K562 (cell line): ENCODE measurements at regions of chr1 and their contacts with region 1.

Region 1: GRCh38 chr1:110203021-110203661 is 7.0 kb upstream of the KCNC4 start:
- DNase-seq: peak; percentile 64 to 80 (median 68)
- ATAC-seq: peak; percentile 75
- H3K4me3 ChIP-seq: no peak overlapping the region
- H3K27ac ChIP-seq: no peak overlapping the region
- H3K4me1 ChIP-seq: no peaks in the 10 kb centered on the region
- H3K27me3 ChIP-seq: peaks cover 3 to 42% of the 10 kb centered on the region in 2 experiments; a peak in 3 of 5 replicates
- CTCF ChIP-seq: peak; percentile 82 to 95 (median 92)
- EP300 ChIP-seq: no peak
- POLR2A ChIP-seq: no peak
- RAD21 ChIP-seq: peak; percentile 93 to 97

Region 2: GRCh38 chr1:110312188-110313121 is 109.3 kb after region 1 on chr1:
- CTCF ChIA-PET with region 1: interaction called, 29 read pairs
- POLR2A ChIA-PET with region 1: interaction called, 3 read pairs
- in situ Hi-C with region 1: loop called (anchors 5 kb)
- intact Hi-C with region 1: loop called (anchors 1 kb)
- DNase-seq: peak; percentile 70 to 76 (median 74)
- ATAC-seq: peak; percentile 98
- H3K4me3 ChIP-seq: no peak overlapping the region
- H3K27ac ChIP-seq: no peak overlapping the region
- H3K4me1 ChIP-seq: no peaks in the 10 kb centered on the region
- H3K27me3 ChIP-seq: peaks cover 0 to 8% of the 10 kb centered on the region in 2 experiments; a peak in 2 of 5 replicates
- CTCF ChIP-seq: peak; percentile 94 to 97 (median 96)
- EP300 ChIP-seq: no peak
- POLR2A ChIP-seq: no peak
- RAD21 ChIP-seq: peak; percentile 96 to 98

Region 3: DNA sequence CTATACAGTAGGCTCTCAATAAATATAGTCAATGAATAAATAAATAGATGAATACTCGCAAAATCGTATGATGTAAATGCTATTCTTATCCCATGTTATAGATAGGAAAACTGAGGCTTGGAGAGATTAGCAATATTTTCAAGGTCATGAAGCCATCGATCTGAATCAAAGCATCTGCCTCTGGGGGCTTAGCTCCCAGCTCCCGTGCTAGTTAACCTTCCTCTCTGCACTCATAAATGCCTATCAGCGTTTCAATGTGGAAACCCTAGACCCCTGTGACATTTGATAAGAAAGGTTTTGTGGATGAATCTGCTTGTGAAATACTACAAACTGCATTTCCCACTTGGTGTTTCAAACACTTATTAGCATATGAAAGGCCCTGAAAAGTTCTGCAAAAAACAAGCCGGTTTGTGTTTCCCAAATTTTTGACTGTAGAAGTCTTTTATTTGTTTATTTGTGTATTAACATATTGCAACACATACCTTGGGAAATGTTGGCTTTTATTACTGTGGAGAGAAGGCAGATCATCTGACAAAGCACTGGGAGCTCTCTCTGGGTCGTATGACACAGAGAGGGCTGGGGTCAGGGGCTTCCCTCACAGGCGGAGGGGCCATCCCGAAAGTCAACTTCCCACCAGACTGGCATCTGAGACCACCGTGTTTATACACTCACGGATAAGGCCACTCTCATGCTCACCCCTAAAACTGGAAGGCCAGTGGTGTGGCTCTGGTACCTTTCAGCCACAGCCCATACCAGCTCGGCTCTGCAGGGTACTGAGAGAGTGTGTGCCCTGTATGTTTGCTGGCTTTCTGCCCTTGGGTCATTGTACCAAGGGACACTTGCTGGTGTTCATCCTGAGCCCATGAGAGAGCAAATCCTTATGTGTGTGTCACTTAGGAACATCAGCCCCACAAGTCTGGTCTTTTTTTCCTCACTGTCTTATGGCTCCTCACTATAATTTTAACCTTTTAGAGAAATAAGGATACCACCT is 246.8 kb after region 1 on chr1:
- CTCF ChIA-PET with region 1: interaction called, 13 read pairs
- POLR2A ChIA-PET with region 1: interaction called, 3 read pairs
- in situ Hi-C with region 1: loop called (anchors 5 kb)
- intact Hi-C with region 1: loop called (anchors 1 kb)
- DNase-seq: peak in 2 of 4 experiments; percentile 56 to 65
- ATAC-seq: no peak
- H3K4me3 ChIP-seq: no peak overlapping the region
- H3K27ac ChIP-seq: no peak overlapping the region
- H3K4me1 ChIP-seq: peaks cover 0 to 4% of the 10 kb centered on the region in 2 experiments; a peak in 2 of 5 replicates
- H3K27me3 ChIP-seq: peaks cover 63 to 75% of the 10 kb centered on the region in 2 experiments
- CTCF ChIP-seq: no peak
- EP300 ChIP-seq: no peak
- POLR2A ChIP-seq: no peak
- RAD21 ChIP-seq: no peak

Region 4: DNA sequence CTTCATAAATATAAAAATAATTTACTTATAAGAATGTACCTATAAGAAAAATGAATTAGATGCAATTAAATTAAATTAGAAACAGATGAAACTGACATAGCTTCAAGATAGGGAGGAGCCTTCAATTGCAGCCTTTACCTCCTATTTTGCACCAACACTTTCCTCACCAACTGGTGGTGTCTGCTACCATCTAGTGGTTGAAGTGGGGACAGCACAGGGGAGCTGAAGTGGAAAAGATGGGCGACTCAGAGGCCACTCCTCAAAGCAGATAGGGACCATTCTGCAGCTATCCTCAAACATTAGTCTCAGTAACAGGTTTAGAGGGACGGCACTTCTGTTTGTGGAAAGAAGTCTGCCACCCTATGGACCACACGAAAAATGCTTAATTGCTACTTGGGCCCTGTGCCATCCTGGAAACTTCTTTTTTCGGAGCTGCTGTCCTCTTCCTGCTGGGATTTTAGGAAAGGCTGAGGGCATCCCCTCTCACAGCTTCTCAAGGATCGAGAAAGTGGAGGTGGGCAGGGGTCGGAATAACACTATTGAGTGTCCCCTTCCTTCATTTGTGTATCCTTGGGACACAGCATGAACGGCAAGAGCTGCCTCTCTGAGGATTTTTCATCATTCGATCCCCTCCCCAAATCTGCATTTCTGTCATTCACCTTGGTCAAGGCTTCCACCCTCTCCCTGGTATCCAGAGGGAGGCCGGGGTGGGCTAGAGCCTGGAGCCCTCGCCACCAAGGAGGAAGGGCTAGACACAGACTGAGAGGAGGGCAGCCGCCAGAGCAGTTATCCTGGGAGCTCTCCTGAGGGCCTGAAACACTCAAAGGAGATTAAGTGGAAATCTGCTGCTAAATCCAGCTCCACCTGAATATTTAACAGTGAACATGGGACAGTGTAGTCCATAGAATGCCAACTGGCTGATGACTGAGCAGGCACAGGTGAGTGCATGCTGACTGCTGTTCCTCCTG is 257.4 kb after region 1 on chr1:
- CTCF ChIA-PET with region 1: interaction called, 58 read pairs
- POLR2A ChIA-PET with region 1: interaction called, 9 read pairs
- in situ Hi-C with region 1: no loop called
- intact Hi-C with region 1: loop called (anchors 1 kb)
- DNase-seq: peak; percentile 83 to 89 (median 88)
- ATAC-seq: peak; percentile 93
- H3K4me3 ChIP-seq: no peak overlapping the region
- H3K27ac ChIP-seq: no peak overlapping the region
- H3K4me1 ChIP-seq: peaks cover under 1 to 2% of the 10 kb centered on the region in 2 experiments; a peak in 3 of 5 replicates
- H3K27me3 ChIP-seq: peaks cover 0 to 19% of the 10 kb centered on the region in 2 experiments; a peak in 3 of 5 replicates
- CTCF ChIP-seq: peak; percentile 96 to 99 (median 98)
- EP300 ChIP-seq: no peak
- POLR2A ChIP-seq: no peak
- RAD21 ChIP-seq: peak; percentile 99